Activated T-helper 2 cell treated with anti-CD3 and anti-CD28 coated beads, Interferon-gamma antibody, Interleukin-2, Interleukin-4, amounts not matched to agents 10 μg/mL and 5 μg/mL and 100 μg/mL, durations not matched to agents 14 hours and 24 hours and 36 hours (primary cell): ENCODE measurements at regions of chr11 and their contacts with region 1.

Region 1: GRCh38 chr11:128290106-128290840 is 297.1 kb downstream of the ETS1 start:
- DNase-seq: peak; percentile 69
- H3K4me3 Mint-ChIP-seq: peak overlapping the region; percentile 84
- H3K27ac Mint-ChIP-seq: peak overlapping the region; percentile 95
- H3K4me1 Mint-ChIP-seq: peaks cover 93% of the 10 kb centered on the region
- H3K27me3 Mint-ChIP-seq: no peaks in the 10 kb centered on the region

Region 2: DNA sequence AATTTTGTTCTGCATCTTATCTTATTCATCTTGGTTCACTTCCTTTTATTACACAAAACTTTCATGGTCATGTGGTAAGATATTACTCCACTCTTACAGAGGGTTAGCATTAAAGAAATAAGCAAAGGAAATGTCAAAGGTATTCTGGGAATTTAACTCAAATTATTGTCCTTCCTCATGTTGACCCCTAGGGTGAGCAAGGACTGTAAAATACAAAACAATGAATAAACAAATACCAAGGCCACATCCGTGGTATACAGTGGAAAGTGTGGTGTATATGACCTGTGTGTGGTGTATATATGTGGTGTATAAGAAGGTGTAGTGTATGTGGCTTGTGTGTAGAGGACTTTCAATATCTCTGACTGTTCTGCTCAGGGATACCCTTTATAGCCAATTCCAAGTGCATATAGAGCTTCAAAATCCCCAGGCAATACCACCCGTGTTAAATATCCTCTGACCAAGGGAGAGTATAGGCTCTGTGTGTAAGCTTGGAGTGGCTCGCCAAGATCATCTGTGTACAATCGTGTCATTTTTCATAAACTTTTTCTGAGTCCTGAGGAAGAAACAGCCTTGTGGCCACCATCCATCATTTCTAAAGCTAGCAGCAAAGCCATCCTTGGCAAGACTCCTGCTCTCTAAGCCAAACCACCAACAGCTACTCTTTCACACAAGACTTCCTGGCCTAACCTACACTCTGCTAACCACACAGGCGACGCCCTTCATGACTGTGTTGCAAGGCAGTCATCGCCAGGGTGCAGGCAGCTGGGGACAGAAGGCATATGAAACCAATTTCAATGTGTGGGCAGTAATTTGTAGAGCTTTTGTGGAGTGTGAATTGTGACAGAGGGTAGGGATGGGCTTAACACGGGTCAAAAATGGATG is 250.9 kb before region 1 on chr11:
- intact Hi-C with region 1: loop called (anchors 1 kb)
- DNase-seq: peak; percentile 80
- H3K4me3 Mint-ChIP-seq: peak overlapping the region; percentile 35
- H3K27ac Mint-ChIP-seq: peak overlapping the region; percentile 91
- H3K4me1 Mint-ChIP-seq: peaks cover 46% of the 10 kb centered on the region
- H3K27me3 Mint-ChIP-seq: no peaks in the 10 kb centered on the region

Region 3: DNA sequence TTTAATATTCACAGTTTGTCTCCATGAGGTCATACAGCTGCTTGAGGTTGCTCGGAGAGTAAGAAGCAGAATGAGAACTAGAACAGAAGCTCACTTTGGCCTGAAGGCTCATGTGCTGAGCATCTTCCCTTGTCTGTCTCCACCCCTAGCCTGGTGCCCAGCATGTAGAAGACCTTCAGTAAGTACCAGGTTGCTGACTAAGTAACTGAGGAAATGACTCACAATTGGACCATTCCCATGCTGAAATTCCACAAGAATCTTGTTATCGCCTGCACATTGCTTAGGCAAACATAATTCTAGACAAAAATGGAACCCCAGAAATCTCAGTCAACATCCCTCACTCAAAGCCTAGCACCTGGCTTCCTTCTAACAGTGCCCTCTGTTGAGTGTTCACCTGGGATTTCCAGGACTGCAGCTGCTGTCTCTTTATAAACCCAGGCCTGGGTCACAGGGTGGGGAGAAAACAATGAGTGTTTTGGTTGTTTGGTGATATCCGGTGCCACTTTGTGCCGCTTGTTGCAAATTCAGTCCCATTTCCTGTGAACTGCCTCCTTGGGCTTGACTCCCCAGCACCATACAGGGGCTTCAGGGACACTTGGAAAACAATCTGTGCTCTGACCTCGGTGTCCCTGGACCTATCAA is 109.7 kb before region 1 on chr11:
- intact Hi-C with region 1: loop called (anchors 1 kb)
- DNase-seq: no peak
- H3K4me3 Mint-ChIP-seq: no peak overlapping the region
- H3K27ac Mint-ChIP-seq: peak overlapping the region; percentile 44
- H3K4me1 Mint-ChIP-seq: peaks cover 61% of the 10 kb centered on the region
- H3K27me3 Mint-ChIP-seq: no peaks in the 10 kb centered on the region

Region 4: GRCh38 chr11:128238521-128239265 is 51.6 kb before region 1 on chr11:
- intact Hi-C with region 1: loop called (anchors 1 kb)
- DNase-seq: no peak
- H3K4me3 Mint-ChIP-seq: peak overlapping the region; percentile 22
- H3K27ac Mint-ChIP-seq: peak overlapping the region; percentile 78
- H3K4me1 Mint-ChIP-seq: peaks cover 34% of the 10 kb centered on the region
- H3K27me3 Mint-ChIP-seq: no peaks in the 10 kb centered on the region

Region 5: DNA sequence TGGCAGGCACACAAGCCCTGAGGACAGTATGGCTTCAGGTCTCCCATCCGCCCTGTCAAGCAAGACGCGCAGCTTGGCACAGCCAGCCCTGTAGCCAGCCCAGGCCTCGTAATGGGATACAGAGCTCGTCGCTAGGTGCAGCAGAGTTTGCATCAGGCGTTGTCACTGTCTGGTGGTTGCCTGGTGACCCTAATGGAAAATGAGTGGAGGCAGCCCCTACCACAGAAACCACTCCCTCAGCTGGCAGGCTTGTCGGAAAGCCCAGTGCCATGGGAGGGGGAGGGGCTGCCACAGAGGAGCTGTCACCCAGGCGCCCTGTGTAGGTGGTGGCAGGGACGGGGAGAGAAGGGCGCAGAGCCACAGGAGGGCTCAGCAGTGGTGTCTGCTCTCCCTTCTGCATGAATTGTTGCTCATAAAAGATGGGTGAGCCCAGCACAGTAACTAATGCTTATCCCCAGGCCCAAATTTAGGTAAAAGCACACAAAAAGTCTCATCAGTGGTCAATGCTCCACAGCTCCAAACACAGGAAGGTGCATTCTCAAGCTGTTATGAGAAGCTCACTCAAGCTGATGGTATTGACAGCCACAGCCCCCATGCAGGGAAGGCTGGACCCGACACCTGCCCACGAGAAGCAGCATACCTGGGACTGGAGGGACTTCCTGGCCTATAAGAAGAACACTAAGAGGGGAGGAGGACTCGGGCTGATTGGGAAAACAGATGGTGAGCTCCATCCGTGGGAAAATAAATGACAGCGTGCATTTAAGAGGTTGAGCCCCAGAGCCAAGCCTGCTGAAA is 132.5 kb after region 1 on chr11:
- intact Hi-C with region 1: loop called (anchors 1 kb)
- DNase-seq: peak; percentile 66
- H3K4me3 Mint-ChIP-seq: peak overlapping the region; percentile 33
- H3K27ac Mint-ChIP-seq: peak overlapping the region; percentile 96
- H3K4me1 Mint-ChIP-seq: peaks cover 43% of the 10 kb centered on the region
- H3K27me3 Mint-ChIP-seq: no peaks in the 10 kb centered on the region

Region 6: DNA sequence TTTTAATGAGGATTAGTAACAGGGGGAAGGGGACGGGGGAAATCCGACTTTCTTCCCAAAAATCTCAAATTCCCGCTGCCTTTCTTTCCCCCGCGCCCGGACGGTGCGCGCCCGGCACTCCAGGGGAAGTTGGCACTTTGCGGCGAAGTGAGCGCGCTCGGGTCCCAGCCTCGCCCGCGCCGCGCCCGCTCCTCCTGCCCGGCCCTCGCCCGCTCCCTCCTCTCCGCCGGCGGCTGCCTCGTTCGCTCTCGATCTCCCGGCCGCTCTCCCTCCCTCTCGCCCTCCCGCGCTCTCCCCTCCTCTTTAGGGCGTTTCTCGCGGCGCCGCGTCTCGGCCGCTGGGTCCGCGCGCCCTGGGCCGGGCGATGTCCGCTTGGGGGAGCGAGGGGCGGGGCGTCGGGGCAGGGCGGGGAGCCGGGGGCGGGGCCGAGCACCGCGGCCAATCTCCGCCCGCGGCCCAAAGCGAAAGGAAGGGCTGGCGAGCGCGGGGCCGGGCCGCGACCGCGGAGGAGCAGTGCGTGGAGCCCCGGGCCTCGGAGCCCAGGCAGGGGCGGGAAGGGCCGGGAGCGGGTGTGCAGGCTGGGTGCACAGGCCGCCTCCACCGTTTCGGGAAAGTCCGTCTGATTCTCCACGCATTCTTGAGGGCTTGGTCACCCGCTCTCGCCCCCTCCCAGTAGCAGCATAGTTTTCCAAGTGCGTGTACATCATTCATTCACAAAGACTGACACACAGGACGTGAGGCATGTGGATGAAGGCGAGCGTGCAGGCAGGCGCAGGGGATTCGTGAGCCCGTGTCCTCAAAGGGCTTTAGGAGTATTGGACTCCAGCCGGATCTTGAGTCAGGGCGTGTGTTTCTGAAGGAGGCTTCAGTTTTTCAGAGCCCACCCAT is 232.0 kb after region 1 on chr11:
- intact Hi-C with region 1: loop called (anchors 1 kb)
- DNase-seq: peak; percentile 90
- H3K4me3 Mint-ChIP-seq: peak overlapping the region; percentile 97
- H3K27ac Mint-ChIP-seq: peak overlapping the region; percentile 97
- H3K4me1 Mint-ChIP-seq: peaks cover 51% of the 10 kb centered on the region
- H3K27me3 Mint-ChIP-seq: no peaks in the 10 kb centered on the region

Region 7: GRCh38 chr11:128757235-128757711 is 467.0 kb after region 1 on chr11:
- intact Hi-C with region 1: loop called (anchors 1 kb)
- DNase-seq: peak; percentile 53
- H3K4me3 Mint-ChIP-seq: peak overlapping the region; percentile 45
- H3K27ac Mint-ChIP-seq: peak overlapping the region; percentile 90
- H3K4me1 Mint-ChIP-seq: peaks cover 55% of the 10 kb centered on the region
- H3K27me3 Mint-ChIP-seq: no peaks in the 10 kb centered on the region